Common myeloid progenitor, CD34-positive (primary cell): ENCODE measurements at regions of chr1 and their contacts with region 1.

Region 1: GRCh38 chr1:225428068-225428880 is 436 bp upstream of the LBR start:
- DNase-seq: peak; percentile 87 to 94 (median 91)
- H3K4me3 ChIP-seq: peak overlapping the region; percentile 63 to 96 (median 89)
- H3K27ac ChIP-seq: peak overlapping the region; percentile 68 to 87
- H3K4me1 ChIP-seq: peaks cover 31 to 58% (median 50%) of the 10 kb centered on the region in 4 experiments
- H3K27me3 ChIP-seq: peaks cover 0 to 2% (median 0%) of the 10 kb centered on the region in 5 experiments

Region 2: GRCh38 chr1:225343624-225344023 is 84.7 kb before region 1 on chr1:
- CTCF ChIA-PET with region 1: no interaction called
- POLR2A ChIA-PET with region 1: no interaction called
- DNase-seq: peak; percentile 6 to 43 (median 41)
- H3K4me3 ChIP-seq: no peak overlapping the region
- H3K27ac ChIP-seq: no peak overlapping the region
- H3K4me1 ChIP-seq: peaks cover 0 to 10% (median 2%) of the 10 kb centered on the region in 4 experiments
- H3K27me3 ChIP-seq: no peaks in the 10 kb centered on the region

Region 3: DNA sequence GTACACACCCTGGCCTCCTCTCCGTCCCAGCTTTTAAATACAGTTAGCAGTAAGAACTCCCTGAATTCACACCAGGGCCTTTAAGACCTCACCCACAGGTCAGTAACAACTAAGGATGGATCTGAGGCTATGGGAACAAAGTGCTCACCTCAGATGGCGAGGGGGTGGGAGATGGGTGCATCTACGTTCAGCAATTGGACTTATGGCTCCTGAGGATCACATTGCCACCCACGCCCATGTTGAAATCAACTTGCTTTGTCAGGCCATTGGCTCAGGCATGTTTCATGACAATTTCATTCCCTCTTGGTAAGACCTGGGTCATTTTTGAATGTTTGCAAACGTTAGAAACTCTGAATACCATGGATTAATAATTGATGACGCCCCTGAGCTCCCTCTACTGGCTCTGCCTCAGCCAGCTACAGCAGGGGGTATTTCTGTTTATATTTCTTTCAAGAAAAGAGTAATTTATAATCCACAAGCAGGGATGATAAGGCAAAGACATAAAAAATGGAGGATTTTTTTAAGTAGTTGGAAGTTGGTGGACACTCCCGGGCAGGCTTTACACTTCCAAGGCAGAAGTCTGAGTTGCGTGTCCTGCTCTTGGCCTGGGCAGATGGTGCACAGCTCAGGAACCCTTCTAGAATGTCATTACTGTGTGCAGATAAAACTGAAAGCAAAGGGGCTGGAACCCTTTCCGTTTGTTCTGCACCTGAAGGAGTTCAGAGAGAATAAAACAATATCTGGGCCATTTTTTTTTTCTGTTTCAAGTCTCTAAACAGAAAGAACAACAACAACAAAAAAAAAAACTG is 13.2 kb after region 1 on chr1:
- CTCF ChIA-PET with region 1: interaction called, 123 read pairs
- POLR2A ChIA-PET with region 1: interaction called, 15 read pairs
- DNase-seq: peak in 1 of 3 donors; percentile 33
- H3K4me3 ChIP-seq: peak overlapping the region in 2 of 7 experiments; percentile 12 to 48
- H3K27ac ChIP-seq: peak overlapping the region in 1 of 2 experiments; percentile 19
- H3K4me1 ChIP-seq: peaks cover 20 to 56% (median 44%) of the 10 kb centered on the region in 4 experiments
- H3K27me3 ChIP-seq: no peaks in the 10 kb centered on the region

Region 4: DNA sequence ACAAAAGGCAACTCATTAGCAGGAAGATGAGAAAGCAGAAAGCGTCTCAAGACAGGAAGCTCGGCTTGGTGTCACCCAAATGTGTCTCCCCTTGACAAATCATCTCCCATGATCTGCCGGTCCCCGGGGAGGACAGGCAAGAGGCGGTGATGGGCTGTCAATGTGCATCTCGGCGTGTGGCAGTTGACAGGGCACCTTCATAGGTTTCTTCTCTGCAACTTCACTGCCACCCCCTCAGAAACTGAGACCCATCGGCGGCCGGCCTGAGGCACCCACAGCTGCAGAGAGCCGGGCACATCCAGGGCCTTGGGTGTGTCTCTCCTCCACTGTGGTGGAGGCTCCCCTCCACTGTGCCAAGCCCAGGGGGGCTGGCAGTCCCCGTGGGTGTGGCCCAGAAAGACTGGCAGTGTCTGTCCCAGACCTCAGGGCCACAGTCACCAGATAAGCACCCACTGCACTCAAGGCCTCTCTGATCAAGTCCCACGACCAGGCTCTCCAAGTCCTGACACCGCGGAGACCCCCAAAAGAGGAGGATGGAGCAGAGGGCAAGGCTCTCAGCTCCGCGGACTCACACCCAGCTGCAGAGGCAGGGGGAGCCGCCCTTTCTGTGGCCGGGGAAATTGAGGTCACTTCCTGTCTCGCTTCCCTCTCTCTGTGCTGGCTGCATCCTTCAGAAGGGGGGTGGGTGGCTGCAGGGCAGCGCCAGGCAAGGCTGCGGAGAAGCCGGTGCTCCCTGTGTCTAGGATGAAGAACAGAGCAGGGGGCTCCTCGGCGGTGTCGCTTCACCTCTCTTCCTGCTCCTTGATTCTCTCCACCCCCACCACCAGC is 39.1 kb after region 1 on chr1:
- CTCF ChIA-PET with region 1: interaction called, 11 read pairs
- POLR2A ChIA-PET with region 1: interaction called, 4 read pairs
- DNase-seq: peak; percentile 87 to 96 (median 94)
- H3K4me3 ChIP-seq: peak overlapping the region; percentile 20 to 89 (median 66)
- H3K27ac ChIP-seq: peak overlapping the region; percentile 58 to 82
- H3K4me1 ChIP-seq: peaks cover 0 to 38% (median 22%) of the 10 kb centered on the region in 4 experiments
- H3K27me3 ChIP-seq: no peaks in the 10 kb centered on the region